ENCODE measurements at regions of chr1 and their contacts with region 1.

Region 1: GRCh38 chr1:84753516-84754385 is 63.5 kb upstream of the SSX2IP start:
- DNase-seq: peak; percentile 44 to 77
- ATAC-seq: peak; percentile 89

Region 2: GRCh38 chr1:84442256-84442655 is 311.5 kb before region 1 on chr1:
- intact Hi-C with region 1: loop called in 1 of 2 experiments (anchors 10 kb)
- DNase-seq: no peak
- ATAC-seq: peak; percentile 96

Region 3: DNA sequence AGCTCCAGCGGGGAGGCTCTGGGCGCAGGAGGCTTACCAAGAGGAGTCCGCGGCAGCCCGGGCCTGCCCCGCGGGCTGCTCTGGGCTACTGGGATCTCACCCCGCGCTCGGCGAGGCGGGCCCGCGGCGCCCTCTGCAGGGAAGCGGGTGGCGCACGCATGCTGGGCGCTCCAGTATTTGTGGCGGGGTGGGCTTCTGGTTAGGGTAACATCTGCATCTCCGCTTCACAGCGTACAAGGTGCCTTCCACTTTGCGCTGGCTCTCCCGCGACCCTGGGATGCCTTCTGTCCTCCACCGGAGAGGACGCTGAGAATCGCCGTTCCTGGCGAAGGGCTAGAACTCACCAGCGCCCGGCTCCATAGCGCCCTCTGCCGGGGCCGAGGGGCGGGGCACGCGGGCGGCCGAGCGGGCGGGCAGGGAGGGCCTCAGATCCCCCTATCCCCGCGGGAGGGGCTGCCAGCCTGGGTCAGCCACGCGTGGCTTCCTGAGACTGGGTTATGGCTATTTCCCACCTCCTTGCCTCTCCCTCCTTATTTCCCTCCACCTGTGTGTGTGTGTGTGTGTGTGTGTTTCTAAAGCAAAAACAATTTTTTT is 132.9 kb before region 1 on chr1:
- intact Hi-C with region 1: loop called in 1 of 2 experiments (anchors 10 kb)
- DNase-seq: peak; percentile 71 to 81
- ATAC-seq: peak; percentile 98

Region 4: GRCh38 chr1:84668185-84668584 is 85.6 kb before region 1 on chr1:
- intact Hi-C with region 1: loop called in 1 of 2 experiments (anchors 5 kb)
- DNase-seq: no peak
- ATAC-seq: no peak